Caco-2 (cell line): ENCODE measurements at regions of chr19 and their contacts with region 1.

Region 1: GRCh38 chr19:52962394-52963246 is at the start of gene ZNF816:
- DNase-seq: peak; percentile 98
- H3K4me3 ChIP-seq: peak within 1 kb of the TSS; percentile 81
- H3K4me3 Mint-ChIP-seq: peak within 1 kb of the TSS; percentile 91
- H3K27ac Mint-ChIP-seq: peak within 1 kb of the TSS; percentile 83
- H3K4me1 ChIP-seq: peaks cover 5% of the 10 kb centered on the region
- H3K4me1 Mint-ChIP-seq: no peaks in the 10 kb centered on the region
- H3K27me3 ChIP-seq: no peaks in the 10 kb centered on the region
- H3K27me3 Mint-ChIP-seq: no peaks in the 10 kb centered on the region
- CTCF ChIP-seq: no peak
- total RNA-seq, gene ZNF816: 8.8 and 11.5 TPM in 2 replicates

Region 2: DNA sequence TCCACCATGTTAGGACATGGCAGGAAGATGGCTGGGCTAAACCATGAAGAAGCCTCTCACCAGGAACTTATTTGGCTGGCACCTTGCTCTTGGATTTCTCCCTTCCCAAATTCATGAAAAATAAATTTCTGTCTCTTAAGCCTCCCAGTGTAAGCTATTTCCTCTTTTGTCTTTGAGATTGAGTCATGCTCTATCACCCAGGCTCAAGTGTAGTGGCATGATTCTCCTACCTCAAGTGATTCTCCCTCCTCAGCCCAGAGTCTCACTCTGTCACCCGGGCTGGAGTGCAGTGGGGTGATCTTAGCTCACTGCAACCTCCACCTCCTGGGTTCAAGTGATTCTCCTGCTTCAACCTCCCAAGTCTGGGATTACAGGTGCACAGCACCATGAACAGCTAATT is 52.0 kb before region 1 on chr19:
- CTCF ChIA-PET with region 1: no interaction called
- POLR2A ChIA-PET with region 1: no interaction called
- intact Hi-C with region 1: no loop called
- DNase-seq: no peak
- H3K4me3 ChIP-seq: no peak overlapping the region
- H3K4me3 Mint-ChIP-seq: no peak overlapping the region
- H3K27ac Mint-ChIP-seq: no peak overlapping the region
- H3K4me1 ChIP-seq: no peaks in the 10 kb centered on the region
- H3K4me1 Mint-ChIP-seq: no peaks in the 10 kb centered on the region
- H3K27me3 ChIP-seq: no peaks in the 10 kb centered on the region
- H3K27me3 Mint-ChIP-seq: no peaks in the 10 kb centered on the region
- CTCF ChIP-seq: no peak

Region 3: GRCh38 chr19:52942386-52943133 is 20.1 kb before region 1 on chr19:
- CTCF ChIA-PET with region 1: no interaction called
- POLR2A ChIA-PET with region 1: no interaction called
- intact Hi-C with region 1: loop called (anchors 2 kb)
- DNase-seq: peak; percentile 94 to 95
- H3K4me3 ChIP-seq: peak overlapping the region; percentile 87
- H3K4me3 Mint-ChIP-seq: peak overlapping the region; percentile 96
- H3K27ac Mint-ChIP-seq: peak overlapping the region; percentile 92
- H3K4me1 ChIP-seq: peaks cover 32% of the 10 kb centered on the region
- H3K4me1 Mint-ChIP-seq: peaks cover 20% of the 10 kb centered on the region
- H3K27me3 ChIP-seq: no peaks in the 10 kb centered on the region
- H3K27me3 Mint-ChIP-seq: no peaks in the 10 kb centered on the region
- CTCF ChIP-seq: no peak

Region 4: GRCh38 chr19:52981329-52981728 is 18.7 kb after region 1 on chr19:
- CTCF ChIA-PET with region 1: no interaction called
- POLR2A ChIA-PET with region 1: no interaction called
- intact Hi-C with region 1: no loop called
- DNase-seq: no peak
- H3K4me3 ChIP-seq: no peak overlapping the region
- H3K4me3 Mint-ChIP-seq: no peak overlapping the region
- H3K27ac Mint-ChIP-seq: peak overlapping the region; percentile 48
- H3K4me1 ChIP-seq: no peaks in the 10 kb centered on the region
- H3K4me1 Mint-ChIP-seq: no peaks in the 10 kb centered on the region
- H3K27me3 ChIP-seq: no peaks in the 10 kb centered on the region
- H3K27me3 Mint-ChIP-seq: no peaks in the 10 kb centered on the region
- CTCF ChIP-seq: no peak